Aorta (tissue), 5 donors: ENCODE measurements at regions of chr6 and their contacts with region 1.

Region 1: GRCh38 chr6:27753668-27754407 is 158.4 kb downstream of the OR2B2 start:
- DNase-seq: peak; percentile 69 to 83
- ATAC-seq: peak; percentile 27
- H3K4me3 ChIP-seq: peak overlapping the region in 1 of 2 donors; percentile 9
- H3K27ac ChIP-seq: no peak overlapping the region
- H3K4me1 ChIP-seq: no peaks in the 10 kb centered on the region
- H3K27me3 ChIP-seq: peaks cover 0 to 4% of the 10 kb centered on the region in 2 donors

Region 2: DNA sequence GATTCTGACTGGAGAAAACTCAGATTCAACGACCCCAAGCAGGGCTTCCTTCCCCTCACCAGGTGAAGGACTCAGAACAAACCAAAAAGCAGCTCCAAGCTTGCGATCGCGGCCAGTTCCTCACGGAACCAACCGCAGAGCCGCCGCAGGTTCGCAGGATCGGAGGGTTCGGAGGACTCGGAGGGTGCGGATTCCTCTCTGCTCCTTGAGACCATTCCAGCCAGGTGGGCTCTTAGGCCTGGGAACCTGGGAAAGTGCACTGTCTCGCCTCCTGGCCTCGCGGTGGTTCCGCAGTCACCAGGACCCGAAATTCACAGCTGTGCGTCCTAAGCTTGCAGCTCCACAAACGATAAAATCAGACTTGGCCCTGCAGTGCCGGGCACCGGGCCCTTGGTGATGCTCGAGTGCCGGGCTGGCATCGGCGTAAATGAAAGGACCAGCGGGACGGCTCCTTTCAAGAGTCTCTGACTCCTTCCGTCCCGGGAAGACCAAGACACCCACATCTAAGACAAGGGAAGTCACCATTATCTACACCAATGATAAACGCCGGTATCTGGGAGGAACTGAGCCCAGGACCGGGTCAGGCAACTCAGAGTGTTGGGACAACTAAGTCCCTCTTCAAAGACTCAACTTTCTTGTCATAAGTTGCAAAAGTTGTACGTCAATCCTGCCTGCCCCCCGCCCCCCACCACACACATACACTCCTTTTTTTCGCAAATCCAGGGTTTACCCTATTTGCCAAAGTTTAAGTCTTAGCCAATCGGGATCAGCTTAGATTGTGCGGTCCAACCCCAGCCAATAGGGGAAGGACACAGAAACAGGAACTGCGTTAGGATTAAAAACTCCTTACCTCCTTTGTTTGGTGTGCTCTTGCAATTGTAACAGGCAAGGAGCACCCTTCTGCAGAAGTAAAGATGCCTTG is 576.1 kb before region 1 on chr6:
- intact Hi-C with region 1: loop called in 1 of 2 experiments (anchors 2 kb)
- DNase-seq: peak; percentile 88 to 92
- ATAC-seq: peak; percentile 92
- H3K4me3 ChIP-seq: peak overlapping the region; percentile 91 to 98
- H3K27ac ChIP-seq: peak overlapping the region in 1 of 2 donors; percentile 83
- H3K4me1 ChIP-seq: no peaks in the 10 kb centered on the region
- H3K27me3 ChIP-seq: no peaks in the 10 kb centered on the region

Region 3: GRCh38 chr6:27472617-27473400 is 281.0 kb before region 1 on chr6 and contains the start of gene ZNF184:
- intact Hi-C with region 1: loop called in 1 of 2 experiments (anchors 10 kb)
- DNase-seq: peak; percentile 97 to 98
- ATAC-seq: peak; percentile 99
- H3K4me3 ChIP-seq: peak within 1 kb of the TSS; percentile 49 to 66
- H3K27ac ChIP-seq: peak within 1 kb of the TSS in 1 of 2 donors; percentile 7
- H3K4me1 ChIP-seq: no peaks in the 10 kb centered on the region
- H3K27me3 ChIP-seq: no peaks in the 10 kb centered on the region
- total RNA-seq, gene ZNF184: 5.3 to 8.0 TPM

Region 4: GRCh38 chr6:27518881-27519795 is 234.7 kb before region 1 on chr6:
- intact Hi-C with region 1: loop called (anchors 2 to 5 kb)
- DNase-seq: peak; percentile 60 to 84
- ATAC-seq: peak; percentile 95
- H3K4me3 ChIP-seq: peak overlapping the region; percentile 69 to 94
- H3K27ac ChIP-seq: peak overlapping the region; percentile 85 to 93
- H3K4me1 ChIP-seq: no peaks in the 10 kb centered on the region
- H3K27me3 ChIP-seq: no peaks in the 10 kb centered on the region

Region 5: DNA sequence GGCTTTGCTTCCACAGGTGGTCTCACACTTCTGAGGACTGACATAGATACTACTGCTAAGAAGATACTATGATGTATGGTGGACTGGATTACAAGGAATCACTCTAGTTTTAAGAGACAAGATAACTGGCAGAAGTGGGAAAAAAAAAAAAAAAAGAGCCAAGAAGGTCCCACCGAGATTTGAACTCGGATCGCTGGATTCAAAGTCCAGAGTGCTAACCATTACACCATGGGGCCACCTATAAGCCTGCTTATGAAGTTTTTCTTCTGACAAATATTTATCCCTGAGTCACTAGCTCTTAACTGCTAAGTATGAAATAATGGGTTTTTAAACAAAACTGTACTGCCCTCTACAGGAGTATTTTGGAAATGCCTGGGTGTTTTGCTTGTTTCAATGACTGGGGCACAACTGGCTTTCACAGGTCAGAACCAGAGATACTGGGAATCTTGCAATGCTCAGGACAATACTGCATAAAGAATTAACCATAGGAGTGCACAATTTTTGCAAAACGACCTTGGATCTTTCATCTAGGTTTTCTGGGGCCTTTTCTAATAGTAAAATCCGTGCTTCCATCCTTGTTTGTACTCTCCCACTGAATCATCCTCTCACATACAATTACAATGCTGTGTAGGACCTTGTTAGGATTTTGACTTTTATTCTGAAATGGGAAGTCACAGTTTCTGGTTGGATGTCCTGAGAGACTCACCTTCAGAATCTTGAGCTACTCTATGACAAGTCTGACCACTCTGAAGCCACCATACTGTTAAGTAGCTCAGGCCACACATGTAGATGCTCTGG is 42.1 kb after region 1 on chr6:
- intact Hi-C with region 1: loop called in 1 of 2 experiments (anchors 2 kb)
- DNase-seq: no peak
- ATAC-seq: peak; percentile 86
- H3K4me3 ChIP-seq: no peak overlapping the region
- H3K27ac ChIP-seq: no peak overlapping the region
- H3K4me1 ChIP-seq: no peaks in the 10 kb centered on the region
- H3K27me3 ChIP-seq: no peaks in the 10 kb centered on the region